ENCODE measurements at regions of chr16 and their contacts with region 1.

Region 1: GRCh38 chr16:57519796-57520360 is 16.5 kb downstream of the CCDC102A start:
- DNase-seq: peak; percentile 68 to 90 (median 77)
- H3K4me3 ChIP-seq: no peak overlapping the region
- H3K27ac ChIP-seq: no peak overlapping the region
- H3K4me1 ChIP-seq: peaks cover 0 to 6% of the 10 kb centered on the region in 2 donors
- H3K27me3 ChIP-seq: no peaks in the 10 kb centered on the region
- CTCF ChIP-seq: peak; percentile 89 to 98 (median 93)
- POLR2A ChIP-seq: peak in 1 of 2 donors; percentile 25

Region 2: DNA sequence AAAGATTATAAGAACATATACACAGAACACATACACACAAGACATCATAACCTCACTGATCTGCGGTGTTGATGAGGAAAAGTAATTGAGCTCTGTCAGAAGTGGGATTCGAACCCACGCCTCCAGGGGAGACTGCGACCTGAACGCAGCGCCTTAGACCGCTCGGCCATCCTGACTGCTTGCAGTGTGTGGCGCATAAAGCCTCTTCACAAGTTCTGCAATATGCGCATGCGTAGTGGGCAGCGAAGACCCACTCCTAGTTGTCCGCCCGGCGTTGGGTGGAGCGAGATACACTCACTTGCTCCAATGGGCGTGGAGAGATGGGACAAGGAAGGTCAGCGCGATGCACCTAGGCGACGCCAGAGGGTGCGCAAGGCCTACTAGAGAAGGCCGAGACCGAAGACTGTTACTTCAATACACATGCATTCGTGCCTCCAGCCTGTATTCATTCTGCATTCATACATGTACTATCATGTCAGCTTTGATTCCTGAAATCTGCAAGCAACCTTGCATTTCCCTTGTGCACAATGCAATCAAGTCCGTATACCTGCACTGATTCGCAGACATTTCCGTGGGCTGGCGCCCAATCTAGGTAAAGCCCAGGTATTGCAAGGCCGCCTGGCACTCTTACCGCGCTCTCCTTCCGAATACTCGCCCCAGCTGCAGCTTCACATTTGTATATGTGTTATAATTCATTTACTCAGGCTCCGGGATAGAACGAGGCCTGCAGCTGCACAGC is 219.3 kb before region 1 on chr16:
- intact Hi-C with region 1: loop called (anchors 5 to 10 kb)
- DNase-seq: peak; percentile 98 to 100 (median 99)
- H3K4me3 ChIP-seq: peak overlapping the region in 2 of 4 donors; percentile 17 to 42
- H3K27ac ChIP-seq: peak overlapping the region; percentile 71 to 91 (median 84)
- H3K4me1 ChIP-seq: peaks cover 3 to 13% of the 10 kb centered on the region in 2 donors
- H3K27me3 ChIP-seq: no peaks in the 10 kb centered on the region
- CTCF ChIP-seq: peak; percentile 75 to 100 (median 99)
- POLR2A ChIP-seq: no peak

Region 3: GRCh38 chr16:57413301-57413730 is 106.6 kb before region 1 on chr16:
- intact Hi-C with region 1: loop called (anchors 2 to 5 kb)
- DNase-seq: no peak
- H3K4me3 ChIP-seq: no peak overlapping the region
- H3K27ac ChIP-seq: no peak overlapping the region
- H3K4me1 ChIP-seq: peaks cover 0 to 13% of the 10 kb centered on the region in 2 donors
- H3K27me3 ChIP-seq: no peaks in the 10 kb centered on the region
- CTCF ChIP-seq: no peak
- POLR2A ChIP-seq: no peak

Region 4: GRCh38 chr16:57419506-57419905 is 100.4 kb before region 1 on chr16:
- intact Hi-C with region 1: loop called (anchors 2 to 5 kb)
- DNase-seq: no peak
- H3K4me3 ChIP-seq: no peak overlapping the region
- H3K27ac ChIP-seq: peak overlapping the region in 2 of 5 donors; percentile 9 to 34
- H3K4me1 ChIP-seq: peaks cover 0 to 22% of the 10 kb centered on the region in 2 donors
- H3K27me3 ChIP-seq: no peaks in the 10 kb centered on the region
- CTCF ChIP-seq: no peak
- POLR2A ChIP-seq: no peak

Region 5: DNA sequence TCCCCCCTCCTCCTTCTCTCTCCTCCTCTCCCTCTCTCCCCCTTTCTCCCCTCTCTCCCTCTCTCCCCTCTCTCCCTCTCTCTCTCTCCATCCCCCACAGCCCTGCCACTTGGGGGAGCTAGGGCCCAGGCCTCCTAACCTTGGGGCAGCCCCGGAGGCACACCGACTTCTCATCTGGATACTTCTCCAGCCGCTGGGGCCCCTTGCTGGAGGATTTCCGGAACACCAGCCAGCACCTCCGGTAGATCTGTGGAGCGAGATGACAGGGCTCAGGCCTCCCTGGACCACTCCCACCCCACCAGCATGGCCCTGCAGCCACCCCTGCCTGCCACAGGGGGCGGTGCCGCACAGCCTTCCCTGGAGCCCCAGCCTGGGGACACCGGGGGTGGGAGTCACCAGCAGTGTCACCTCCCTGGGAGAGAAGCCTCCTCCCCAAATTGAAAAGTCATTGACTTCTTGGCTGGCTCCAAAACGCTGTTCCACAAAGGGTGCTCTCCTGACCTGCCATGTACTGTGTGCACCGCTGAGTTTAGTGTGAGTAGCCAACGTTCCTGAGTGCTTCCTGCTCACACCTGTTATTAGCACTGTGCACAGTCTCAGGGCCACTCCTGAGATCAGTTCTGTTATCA is 44.1 kb before region 1 on chr16:
- intact Hi-C with region 1: loop called in 1 of 2 experiments (anchors 5 kb)
- DNase-seq: peak in 4 of 7 donors; percentile 30 to 74 (median 50)
- H3K4me3 ChIP-seq: no peak overlapping the region
- H3K27ac ChIP-seq: peak overlapping the region in 1 of 5 donors; percentile 20
- H3K4me1 ChIP-seq: peaks cover 6 to 33% of the 10 kb centered on the region in 2 donors
- H3K27me3 ChIP-seq: no peaks in the 10 kb centered on the region
- CTCF ChIP-seq: peak in 5 of 6 experiments; percentile 16 to 54 (median 34)
- POLR2A ChIP-seq: no peak

Measured in adrenal gland (tissue), 19 donors.